Activated CD4-positive, alpha-beta memory T cell treated with anti-CD3 and anti-CD28 coated beads for 36 hours (primary cell): ENCODE measurements at regions of chr9 and their contacts with region 1.

Region 1: DNA sequence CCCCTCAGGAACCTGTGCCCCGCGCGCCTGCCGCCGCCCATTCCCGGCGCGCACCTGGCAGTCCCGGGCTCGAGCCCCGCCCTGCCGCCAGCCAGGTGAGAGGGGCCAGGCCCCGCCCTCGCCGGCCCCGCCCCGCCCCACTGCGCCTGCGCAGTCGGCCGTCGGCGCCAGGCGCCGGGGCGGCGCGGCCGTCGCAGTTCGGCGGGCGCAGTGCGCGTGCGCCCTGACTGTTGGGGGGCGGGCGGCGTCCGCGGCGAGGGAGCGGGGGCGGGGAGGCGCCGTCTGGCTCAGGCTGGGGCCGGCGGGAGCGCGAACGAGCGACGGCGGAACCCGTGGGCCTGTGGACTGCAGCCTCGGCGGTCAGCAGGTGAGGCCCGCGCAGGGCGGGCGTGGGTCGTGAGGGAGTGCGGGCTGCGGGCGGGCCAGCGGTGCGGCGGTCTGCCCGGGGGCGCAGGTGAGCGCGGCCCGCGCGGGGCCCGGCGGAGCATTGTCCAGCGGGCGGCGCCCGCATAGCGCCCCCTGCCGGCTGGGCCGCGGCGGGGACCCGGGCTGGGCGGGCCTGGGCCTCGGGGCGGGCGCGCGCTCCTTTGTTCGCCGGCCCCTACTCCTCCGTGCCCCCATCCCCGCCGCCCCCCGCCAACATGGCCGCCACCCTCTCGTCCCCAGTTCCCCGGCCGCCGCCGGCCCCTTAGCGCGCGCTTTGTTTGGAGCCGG is at the start of gene SPIN1:
- DNase-seq: peak; percentile 88
- H3K4me3 Mint-ChIP-seq: peak within 1 kb of the TSS; percentile 91
- H3K27ac Mint-ChIP-seq: peak within 1 kb of the TSS; percentile 97
- H3K4me1 Mint-ChIP-seq: peaks cover 28% of the 10 kb centered on the region
- H3K27me3 Mint-ChIP-seq: no peaks in the 10 kb centered on the region
- total RNA-seq, gene SPIN1: 19.6 to 20.8 TPM

Region 2: GRCh38 chr9:88049677-88050352 is 338.5 kb before region 1 on chr9:
- CTCF ChIA-PET with region 1: no interaction called
- POLR2A ChIA-PET with region 1: no interaction called
- intact Hi-C with region 1: loop called (anchors 1 kb)
- DNase-seq: no peak
- H3K4me3 Mint-ChIP-seq: no peak overlapping the region
- H3K27ac Mint-ChIP-seq: no peak overlapping the region
- H3K4me1 Mint-ChIP-seq: peaks cover 12% of the 10 kb centered on the region
- H3K27me3 Mint-ChIP-seq: peaks cover 20% of the 10 kb centered on the region

Region 3: DNA sequence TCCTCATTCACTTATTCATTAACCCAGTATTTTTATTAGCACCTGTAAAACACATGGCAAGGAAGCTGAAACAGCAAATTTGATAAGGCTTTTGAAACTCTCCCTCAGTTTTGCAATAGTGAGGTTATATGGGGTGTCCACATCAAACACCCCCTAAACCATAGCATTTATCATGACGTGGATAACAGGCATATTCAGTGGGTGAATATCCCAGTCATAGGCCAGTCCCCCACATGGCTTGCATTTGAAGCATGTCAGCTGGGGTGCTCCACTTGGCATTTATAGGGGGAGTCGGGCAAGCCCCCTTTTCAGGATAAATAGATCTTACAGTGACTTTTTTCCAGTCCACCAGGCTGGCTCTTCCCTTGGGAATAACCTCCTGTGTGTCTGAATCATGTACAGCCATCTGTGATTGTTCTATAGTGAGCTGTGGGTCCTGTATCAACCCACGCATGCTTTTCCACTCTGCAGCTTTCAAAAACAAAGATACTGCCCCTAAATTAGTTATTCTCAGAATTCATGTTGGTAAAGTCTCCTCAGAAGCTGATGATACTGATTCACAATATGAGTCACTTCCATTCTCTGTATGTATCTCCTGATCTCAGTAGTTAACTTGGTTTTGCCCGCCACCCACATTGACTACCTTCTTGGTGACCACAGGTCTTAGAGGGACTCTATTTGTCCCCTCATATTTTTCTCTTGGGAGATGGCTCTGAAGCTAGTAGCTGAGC is 84.4 kb before region 1 on chr9:
- CTCF ChIA-PET with region 1: no interaction called
- POLR2A ChIA-PET with region 1: no interaction called
- intact Hi-C with region 1: loop called (anchors 1 kb)
- DNase-seq: peak; percentile 80
- H3K4me3 Mint-ChIP-seq: peak overlapping the region; percentile 33
- H3K27ac Mint-ChIP-seq: no peak overlapping the region
- H3K4me1 Mint-ChIP-seq: peaks cover 21% of the 10 kb centered on the region
- H3K27me3 Mint-ChIP-seq: peaks cover 26% of the 10 kb centered on the region

Region 4: GRCh38 chr9:88370292-88370691 is 18.0 kb before region 1 on chr9:
- CTCF ChIA-PET with region 1: no interaction called
- POLR2A ChIA-PET with region 1: no interaction called
- intact Hi-C with region 1: no loop called
- DNase-seq: no peak
- H3K4me3 Mint-ChIP-seq: no peak overlapping the region
- H3K27ac Mint-ChIP-seq: no peak overlapping the region
- H3K4me1 Mint-ChIP-seq: no peaks in the 10 kb centered on the region
- H3K27me3 Mint-ChIP-seq: peaks cover 3% of the 10 kb centered on the region

Region 5: GRCh38 chr9:88477300-88477751 is 89.0 kb after region 1 on chr9:
- CTCF ChIA-PET with region 1: no interaction called
- POLR2A ChIA-PET with region 1: no interaction called
- intact Hi-C with region 1: loop called (anchors 1 kb)
- DNase-seq: no peak
- H3K4me3 Mint-ChIP-seq: no peak overlapping the region
- H3K27ac Mint-ChIP-seq: peak overlapping the region; percentile 4
- H3K4me1 Mint-ChIP-seq: peaks cover 19% of the 10 kb centered on the region
- H3K27me3 Mint-ChIP-seq: no peaks in the 10 kb centered on the region

Region 6: GRCh38 chr9:88651682-88652633 is 263.6 kb after region 1 on chr9:
- CTCF ChIA-PET with region 1: no interaction called
- POLR2A ChIA-PET with region 1: no interaction called
- intact Hi-C with region 1: no loop called
- DNase-seq: no peak
- H3K4me3 Mint-ChIP-seq: no peak overlapping the region
- H3K27ac Mint-ChIP-seq: no peak overlapping the region
- H3K4me1 Mint-ChIP-seq: no peaks in the 10 kb centered on the region
- H3K27me3 Mint-ChIP-seq: peaks cover 16% of the 10 kb centered on the region

Region 7: DNA sequence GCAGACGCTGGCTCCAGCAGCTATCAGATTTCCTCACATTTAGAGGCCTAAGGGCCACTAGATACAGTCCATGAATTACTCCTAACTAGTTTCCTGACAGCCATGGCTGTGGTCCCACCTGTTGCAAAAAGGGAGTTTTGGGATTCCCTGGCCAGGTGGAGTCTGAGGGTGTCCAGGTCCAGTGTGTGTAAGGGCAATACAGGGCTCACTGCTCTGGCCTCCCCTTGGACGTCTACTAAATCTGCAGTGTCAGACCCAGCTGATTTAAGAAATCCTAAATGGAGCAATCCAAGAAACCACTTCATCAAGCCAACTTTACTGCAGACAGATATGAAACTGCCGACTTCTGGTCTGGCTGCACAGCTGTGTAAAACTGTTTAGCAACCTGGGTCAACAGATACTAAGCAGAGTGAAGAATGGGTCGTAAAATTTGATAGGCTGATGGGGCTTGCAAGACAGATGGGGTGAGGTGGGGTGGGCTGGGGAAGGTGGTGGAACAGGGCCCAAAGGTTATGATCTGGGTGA is 1332.9 kb after region 1 on chr9:
- CTCF ChIA-PET with region 1: no interaction called
- POLR2A ChIA-PET with region 1: no interaction called
- intact Hi-C with region 1: no loop called
- DNase-seq: no peak
- H3K4me3 Mint-ChIP-seq: no peak overlapping the region
- H3K27ac Mint-ChIP-seq: no peak overlapping the region
- H3K4me1 Mint-ChIP-seq: peaks cover 7% of the 10 kb centered on the region
- H3K27me3 Mint-ChIP-seq: no peaks in the 10 kb centered on the region